ENCODE measurements at regions of chr11 and their contacts with region 1.

Region 1: DNA sequence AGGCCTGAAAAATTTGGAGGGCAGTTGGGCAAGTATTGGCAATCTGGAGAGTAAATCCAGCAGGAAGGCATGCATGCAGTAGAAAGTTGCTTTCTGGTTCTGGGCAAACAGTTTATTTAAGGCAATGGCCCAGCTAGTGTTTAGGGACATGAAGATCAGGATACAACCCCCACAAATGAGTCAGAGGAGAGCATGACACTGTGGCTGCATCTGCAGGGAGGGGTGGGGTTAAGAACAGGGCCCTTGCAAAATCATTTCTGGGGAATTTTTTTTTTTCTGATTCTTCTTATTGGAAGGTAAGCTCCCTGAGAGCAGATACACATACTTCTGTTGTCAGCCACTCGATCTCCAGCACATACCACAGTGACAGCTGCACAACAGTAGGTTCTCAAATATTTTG is 61.1 kb downstream of the FDX1 start:
- H3K4me3 Mint-ChIP-seq: no peak overlapping the region
- H3K27ac Mint-ChIP-seq: peak overlapping the region; percentile 70
- H3K4me1 Mint-ChIP-seq: peaks cover 44% of the 10 kb centered on the region
- H3K27me3 Mint-ChIP-seq: no peaks in the 10 kb centered on the region

Region 2: DNA sequence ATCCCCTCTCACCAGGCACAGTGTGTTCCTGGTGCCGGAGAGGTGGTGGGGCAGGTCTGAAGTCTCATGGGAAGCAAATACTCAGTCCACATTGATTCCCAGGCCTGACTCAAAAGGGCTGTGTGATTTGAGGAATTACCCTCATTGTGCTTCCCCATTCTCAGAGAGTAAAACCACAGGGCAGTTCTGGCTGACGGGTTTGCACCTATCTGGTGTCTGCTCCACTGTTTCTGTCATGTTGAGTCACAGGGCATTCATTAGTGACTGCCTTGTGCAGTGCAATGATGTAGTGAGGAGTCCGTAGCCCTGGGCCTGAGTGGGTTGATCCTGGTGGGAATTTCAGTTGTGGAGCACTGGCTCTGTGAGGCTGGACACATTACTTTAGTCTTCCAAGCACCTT is 306.6 kb after region 1 on chr11:
- intact Hi-C with region 1: loop called (anchors 10 kb)
- H3K4me3 Mint-ChIP-seq: no peak overlapping the region
- H3K27ac Mint-ChIP-seq: peak overlapping the region; percentile 74
- H3K4me1 Mint-ChIP-seq: peaks cover 33% of the 10 kb centered on the region
- H3K27me3 Mint-ChIP-seq: peaks cover 3% of the 10 kb centered on the region

Measured in dendritic cell treated with granulocyte-macrophage colony-stimulating factor and Interleukin-4, amounts not matched to agents 40 ng/mL and 50 ng/mL, for 4 days (primary cell).